ENCODE measurements at regions of chr1 and their contacts with region 1.

Region 1: DNA sequence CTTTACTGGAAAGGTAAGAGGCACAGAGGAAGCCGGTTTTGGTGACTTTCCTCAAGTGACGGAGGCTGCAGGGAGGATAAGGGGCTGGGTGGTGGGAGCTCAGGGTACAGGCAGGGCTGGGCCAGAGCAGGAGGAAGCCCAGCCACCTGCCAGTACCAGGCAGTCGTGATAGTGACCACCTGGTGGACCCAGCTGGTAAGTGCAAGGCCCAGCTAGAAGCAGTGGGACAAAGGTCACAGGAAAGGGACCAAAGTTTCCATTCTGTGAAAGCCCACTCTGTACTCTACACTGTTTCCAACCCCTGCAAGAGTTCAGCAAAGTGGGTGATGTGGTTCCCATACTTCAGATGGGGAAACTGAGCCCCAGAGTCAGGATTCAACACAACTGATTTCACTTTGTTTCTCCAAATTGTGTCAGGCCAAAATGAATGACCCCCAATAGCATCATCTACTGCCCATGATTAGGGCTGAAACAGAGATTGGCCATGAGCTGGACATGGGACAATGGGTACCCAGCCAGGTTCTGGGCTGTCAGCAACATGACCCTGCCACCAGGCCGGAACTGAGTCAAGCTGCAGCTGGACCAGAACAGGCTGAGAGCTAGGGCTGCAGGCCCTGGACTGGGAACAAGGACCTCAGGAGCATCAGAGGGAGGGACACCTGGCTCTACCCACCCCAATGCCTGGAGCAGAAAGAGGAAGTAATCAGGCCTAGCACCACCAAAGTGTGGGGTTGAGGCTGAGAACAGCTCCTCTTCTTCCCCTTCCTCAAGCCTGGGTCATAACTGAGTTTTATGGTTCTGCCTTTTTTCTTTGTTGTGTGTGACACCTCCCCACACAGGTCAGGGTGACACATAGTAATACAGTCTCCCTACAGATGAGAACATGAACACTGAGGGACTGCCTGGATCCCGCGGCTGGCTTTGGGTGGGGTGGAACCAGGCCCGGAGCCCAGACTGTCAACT is 50.2 kb downstream of the KCNN3 start:
- ATAC-seq: peak in 1 of 8 experiments; percentile 75
- H3K4me3 ChIP-seq: no peak overlapping the region
- H3K27ac ChIP-seq: no peak overlapping the region
- H3K4me1 ChIP-seq: peaks cover 3 to 17% of the 10 kb centered on the region in 2 donors

Region 2: GRCh38 chr1:154607106-154607608 is 212.8 kb before region 1 on chr1:
- in situ Hi-C with region 1: no loop called
- ATAC-seq: peak in 3 of 8 experiments; percentile 1 to 4 (median 2)
- H3K4me3 ChIP-seq: peak overlapping the region; percentile 42 to 90 (median 64)
- H3K27ac ChIP-seq: peak overlapping the region in 1 of 2 donors; percentile 91
- H3K4me1 ChIP-seq: peaks cover 24 to 25% of the 10 kb centered on the region in 2 donors

Region 3: DNA sequence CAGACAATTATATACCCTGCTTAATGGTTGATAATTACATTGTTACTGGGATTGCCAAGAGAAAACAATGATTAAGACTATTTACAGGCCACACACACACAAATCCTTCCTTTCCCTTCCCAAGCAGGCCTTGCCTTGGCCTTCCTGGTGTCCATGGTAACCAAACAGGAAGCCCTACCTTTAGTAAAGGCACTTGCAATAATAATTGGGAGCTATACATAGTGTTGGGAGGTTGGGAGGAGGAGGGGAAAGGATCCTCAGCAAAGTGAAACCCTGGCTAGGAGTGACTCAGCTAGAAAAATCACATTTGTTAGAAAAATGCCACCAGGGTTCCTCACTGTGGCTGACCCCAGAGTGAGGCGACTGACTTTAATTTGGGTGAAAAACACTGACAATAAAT is 89.7 kb before region 1 on chr1:
- in situ Hi-C with region 1: no loop called
- ATAC-seq: peak; percentile 35 to 93 (median 68)
- H3K4me3 ChIP-seq: no peak overlapping the region
- H3K27ac ChIP-seq: peak overlapping the region; percentile 6 to 36
- H3K4me1 ChIP-seq: peaks cover 62 to 68% of the 10 kb centered on the region in 2 donors

Region 4: DNA sequence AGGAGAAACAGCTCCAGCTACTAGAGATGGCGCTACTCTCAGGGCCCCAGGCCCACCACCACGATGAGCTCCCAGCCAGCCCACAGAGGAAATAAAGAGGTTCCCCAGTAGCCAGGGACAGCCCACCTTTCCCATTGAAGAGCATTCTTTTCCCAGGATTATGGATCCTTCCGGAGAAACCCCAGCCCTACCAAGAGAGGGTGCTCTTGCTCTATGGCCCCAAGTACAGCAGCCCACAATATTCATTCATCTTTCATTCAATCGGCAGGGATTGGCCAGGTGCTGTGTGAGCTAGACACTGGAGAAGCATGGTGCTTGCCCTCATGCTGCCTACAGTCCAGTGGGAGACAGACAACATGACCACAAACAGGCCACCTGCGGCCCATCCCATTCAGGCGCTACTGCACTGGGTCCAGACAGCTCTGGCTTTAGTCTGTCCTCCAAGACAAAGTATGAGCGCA is 86.7 kb after region 1 on chr1:
- in situ Hi-C with region 1: loop called in 1 of 9 experiments (anchors 25 kb)
- ATAC-seq: no peak
- H3K4me3 ChIP-seq: no peak overlapping the region
- H3K27ac ChIP-seq: no peak overlapping the region
- H3K4me1 ChIP-seq: no peaks in the 10 kb centered on the region